ENCODE measurements at regions of chr1 and their contacts with region 1.

Region 1: GRCh38 chr1:173476664-173477285 is 360 bp upstream of the PRDX6 start:
- DNase-seq: peak; percentile 53 to 91 (median 75)
- ATAC-seq: peak; percentile 79
- H3K4me3 ChIP-seq: peak overlapping the region; percentile 84
- H3K4me3 Mint-ChIP-seq: peak overlapping the region; percentile 93
- H3K27ac ChIP-seq: peak overlapping the region; percentile 48 to 89
- H3K27ac Mint-ChIP-seq: peak overlapping the region; percentile 82
- H3K4me1 ChIP-seq: peaks cover 32% of the 10 kb centered on the region
- H3K4me1 Mint-ChIP-seq: peaks cover 72% of the 10 kb centered on the region
- H3K27me3 ChIP-seq: no peaks in the 10 kb centered on the region
- H3K27me3 Mint-ChIP-seq: no peaks in the 10 kb centered on the region
- CTCF ChIP-seq: no peak

Region 2: DNA sequence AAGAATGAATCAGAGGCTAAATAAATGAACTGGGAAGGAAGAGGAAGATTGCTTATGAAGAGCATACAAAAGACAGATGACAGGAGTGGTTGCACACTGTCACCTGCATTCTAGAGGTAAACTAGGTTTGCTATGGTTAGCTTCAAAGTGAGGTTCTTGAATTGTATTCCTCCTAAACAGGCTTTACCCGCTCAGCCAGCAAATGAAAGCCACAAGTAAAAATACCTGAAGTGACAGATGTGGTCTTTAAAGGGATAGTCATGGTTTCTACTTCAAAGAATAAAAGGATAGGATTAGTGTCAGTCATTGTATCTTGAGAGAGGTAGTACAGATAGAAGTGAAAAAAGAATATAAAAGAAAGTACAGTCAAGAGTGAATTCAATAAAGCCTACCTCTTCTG is 32.0 kb before region 1 on chr1:
- CTCF ChIA-PET with region 1: no interaction called
- POLR2A ChIA-PET with region 1: interaction called, 12 read pairs
- intact Hi-C with region 1: no loop called
- DNase-seq: peak in 3 of 14 experiments; percentile 45 to 58 (median 53)
- ATAC-seq: peak; percentile 84
- H3K4me3 ChIP-seq: no peak overlapping the region
- H3K4me3 Mint-ChIP-seq: peak overlapping the region; percentile 1
- H3K27ac ChIP-seq: peak overlapping the region in 1 of 2 donors; percentile 1
- H3K27ac Mint-ChIP-seq: no peak overlapping the region
- H3K4me1 ChIP-seq: peaks cover 7% of the 10 kb centered on the region
- H3K4me1 Mint-ChIP-seq: peaks cover 24% of the 10 kb centered on the region
- H3K27me3 ChIP-seq: no peaks in the 10 kb centered on the region
- H3K27me3 Mint-ChIP-seq: no peaks in the 10 kb centered on the region
- CTCF ChIP-seq: no peak

Region 3: GRCh38 chr1:173628888-173629287 is 152.1 kb after region 1 on chr1:
- CTCF ChIA-PET with region 1: no interaction called
- POLR2A ChIA-PET with region 1: no interaction called
- intact Hi-C with region 1: no loop called
- DNase-seq: peak in 2 of 14 experiments; percentile 7 to 28
- ATAC-seq: no peak
- H3K4me3 ChIP-seq: no peak overlapping the region
- H3K4me3 Mint-ChIP-seq: no peak overlapping the region
- H3K27ac ChIP-seq: no peak overlapping the region
- H3K27ac Mint-ChIP-seq: no peak overlapping the region
- H3K4me1 ChIP-seq: no peaks in the 10 kb centered on the region
- H3K4me1 Mint-ChIP-seq: no peaks in the 10 kb centered on the region
- H3K27me3 ChIP-seq: no peaks in the 10 kb centered on the region
- H3K27me3 Mint-ChIP-seq: peaks cover 8% of the 10 kb centered on the region
- CTCF ChIP-seq: no peak

Region 4: DNA sequence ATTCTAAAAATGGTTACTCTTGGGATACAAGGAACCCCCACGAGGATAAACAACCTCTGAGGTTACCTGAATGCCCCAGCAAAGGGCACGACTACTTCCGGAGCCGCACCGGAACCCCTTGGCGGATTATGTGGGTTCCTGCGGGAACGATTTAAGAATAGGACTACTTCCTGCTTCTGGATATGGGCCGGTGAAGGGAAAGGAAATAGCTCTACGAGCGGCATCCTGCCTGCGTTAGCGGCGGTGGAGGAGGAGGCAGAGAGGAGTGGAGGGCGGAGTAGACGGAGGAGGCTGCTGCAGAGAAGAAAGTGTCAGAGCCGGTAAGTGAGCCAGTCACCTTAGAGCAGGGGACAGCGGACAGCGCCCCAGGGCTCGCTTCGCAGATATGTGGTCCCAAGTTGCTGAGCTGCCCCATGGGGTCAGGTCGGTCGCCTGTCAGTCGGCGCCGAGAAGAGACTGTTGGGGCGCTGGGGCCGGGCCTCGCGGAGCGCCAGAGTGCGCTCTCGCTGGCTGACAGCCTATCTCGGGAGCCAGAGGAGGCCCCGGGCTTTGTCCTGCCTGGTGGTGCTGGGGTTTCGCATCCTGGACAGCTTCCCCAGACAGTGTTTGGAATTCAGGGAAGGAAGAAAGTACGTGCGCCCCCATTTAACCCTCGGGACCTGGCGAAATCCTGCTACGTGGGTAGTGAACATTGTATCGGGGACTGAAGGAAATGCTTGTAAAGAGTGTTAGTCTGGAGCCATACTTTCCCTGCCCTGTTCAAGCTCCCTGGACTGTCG is 238.2 kb after region 1 on chr1 and contains the start of gene KLHL20:
- CTCF ChIA-PET with region 1: no interaction called
- POLR2A ChIA-PET with region 1: interaction called, 36 read pairs
- intact Hi-C with region 1: loop called in 1 of 2 experiments (anchors 2 kb)
- DNase-seq: peak; percentile 70 to 94 (median 81)
- ATAC-seq: peak; percentile 97
- H3K4me3 ChIP-seq: peak within 1 kb of the TSS; percentile 63
- H3K4me3 Mint-ChIP-seq: peak within 1 kb of the TSS; percentile 97
- H3K27ac ChIP-seq: peak within 1 kb of the TSS; percentile 73 to 81
- H3K27ac Mint-ChIP-seq: peak within 1 kb of the TSS; percentile 91
- H3K4me1 ChIP-seq: peaks cover 8% of the 10 kb centered on the region
- H3K4me1 Mint-ChIP-seq: peaks cover 36% of the 10 kb centered on the region
- H3K27me3 ChIP-seq: peaks cover 4 to 19% of the 10 kb centered on the region in 2 experiments
- H3K27me3 Mint-ChIP-seq: peaks cover 18% of the 10 kb centered on the region
- CTCF ChIP-seq: no peak
- total RNA-seq, gene KLHL20: 29.4 to 30.4 TPM

Region 5: GRCh38 chr1:173867753-173868265 is 391.0 kb after region 1 on chr1 and contains the start of gene GAS5:
- CTCF ChIA-PET with region 1: no interaction called
- POLR2A ChIA-PET with region 1: interaction called, 18 read pairs
- intact Hi-C with region 1: loop called in 1 of 2 experiments (anchors 5 kb)
- DNase-seq: peak; percentile 98 to 100 (median 99)
- ATAC-seq: peak; percentile 79
- H3K4me3 ChIP-seq: peak within 1 kb of the TSS; percentile 90
- H3K4me3 Mint-ChIP-seq: peak within 1 kb of the TSS; percentile 93
- H3K27ac ChIP-seq: peak within 1 kb of the TSS; percentile 96
- H3K27ac Mint-ChIP-seq: peak within 1 kb of the TSS; percentile 95
- H3K4me1 ChIP-seq: peaks cover 59% of the 10 kb centered on the region
- H3K4me1 Mint-ChIP-seq: peaks cover 85% of the 10 kb centered on the region
- H3K27me3 ChIP-seq: no peaks in the 10 kb centered on the region
- H3K27me3 Mint-ChIP-seq: no peaks in the 10 kb centered on the region
- CTCF ChIP-seq: no peak
- total RNA-seq, gene GAS5: 865 to 867 TPM

Region 6: GRCh38 chr1:174159252-174160108 is 682.7 kb after region 1 on chr1 and contains the start of gene RABGAP1L:
- CTCF ChIA-PET with region 1: no interaction called
- POLR2A ChIA-PET with region 1: interaction called, 3 read pairs
- intact Hi-C with region 1: loop called in 1 of 2 experiments (anchors 5 kb)
- DNase-seq: peak; percentile 88 to 99 (median 94)
- ATAC-seq: peak; percentile 90
- H3K4me3 ChIP-seq: peak within 1 kb of the TSS; percentile 73
- H3K4me3 Mint-ChIP-seq: peak within 1 kb of the TSS; percentile 96
- H3K27ac ChIP-seq: peak within 1 kb of the TSS; percentile 85 to 95
- H3K27ac Mint-ChIP-seq: peak within 1 kb of the TSS; percentile 92
- H3K4me1 ChIP-seq: peaks cover 20% of the 10 kb centered on the region
- H3K4me1 Mint-ChIP-seq: peaks cover 58% of the 10 kb centered on the region
- H3K27me3 ChIP-seq: no peaks in the 10 kb centered on the region
- H3K27me3 Mint-ChIP-seq: no peaks in the 10 kb centered on the region
- CTCF ChIP-seq: no peak
- total RNA-seq, gene RABGAP1L: 59.8 to 67.6 TPM